Adrenal gland (tissue), 19 donors: ENCODE measurements at regions of chr2 and their contacts with region 1.

Region 1: DNA sequence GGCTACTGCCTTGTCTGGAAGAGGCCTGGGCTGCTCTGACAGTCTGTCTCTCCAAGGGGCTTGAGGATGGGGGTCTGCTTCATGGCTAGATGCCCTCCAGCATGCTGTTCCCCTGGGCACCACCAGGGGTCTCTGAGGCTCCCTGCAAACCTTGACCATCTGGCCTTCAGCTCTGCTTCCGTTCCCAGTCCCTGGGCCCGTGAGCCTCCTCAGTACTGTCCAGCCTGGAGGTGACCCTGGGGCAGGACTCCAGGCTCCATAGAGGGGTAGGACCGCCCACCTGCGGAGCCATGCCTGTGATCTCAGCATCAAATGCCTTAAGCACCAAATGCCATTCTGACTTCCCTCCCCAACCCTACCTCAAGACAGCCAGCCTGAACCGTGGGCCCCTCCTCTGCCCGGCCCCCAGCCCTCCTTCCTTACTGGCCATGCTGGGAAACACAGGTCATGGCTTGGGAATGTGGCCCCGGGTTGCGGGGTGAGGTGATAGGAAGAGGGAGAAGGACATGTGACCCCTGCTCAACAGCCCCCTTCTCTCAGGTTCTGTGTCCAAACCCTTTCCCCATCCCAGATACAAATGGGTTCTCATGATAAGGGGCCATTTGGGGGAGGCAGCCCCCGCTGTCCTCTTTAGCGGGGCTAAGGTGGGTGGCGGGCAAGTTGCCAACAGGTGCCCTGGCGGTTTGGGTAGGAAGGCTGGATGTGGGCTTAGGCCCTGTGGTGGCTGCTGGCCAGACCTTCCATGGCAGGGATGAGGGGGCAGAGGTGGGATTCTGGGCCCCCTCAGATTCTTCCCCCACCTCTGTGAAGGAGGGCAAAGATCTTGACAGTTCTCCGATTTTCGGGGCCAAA is 25.0 kb downstream of the SPEG start:
- DNase-seq: peak; percentile 45 to 79 (median 59)
- H3K4me3 ChIP-seq: no peak overlapping the region
- H3K27ac ChIP-seq: peak overlapping the region in 2 of 5 donors; percentile 0 to 47
- H3K4me1 ChIP-seq: no peaks in the 10 kb centered on the region
- H3K27me3 ChIP-seq: no peaks in the 10 kb centered on the region
- CTCF ChIP-seq: peak; percentile 62 to 78 (median 74)
- POLR2A ChIP-seq: no peak

Region 2: DNA sequence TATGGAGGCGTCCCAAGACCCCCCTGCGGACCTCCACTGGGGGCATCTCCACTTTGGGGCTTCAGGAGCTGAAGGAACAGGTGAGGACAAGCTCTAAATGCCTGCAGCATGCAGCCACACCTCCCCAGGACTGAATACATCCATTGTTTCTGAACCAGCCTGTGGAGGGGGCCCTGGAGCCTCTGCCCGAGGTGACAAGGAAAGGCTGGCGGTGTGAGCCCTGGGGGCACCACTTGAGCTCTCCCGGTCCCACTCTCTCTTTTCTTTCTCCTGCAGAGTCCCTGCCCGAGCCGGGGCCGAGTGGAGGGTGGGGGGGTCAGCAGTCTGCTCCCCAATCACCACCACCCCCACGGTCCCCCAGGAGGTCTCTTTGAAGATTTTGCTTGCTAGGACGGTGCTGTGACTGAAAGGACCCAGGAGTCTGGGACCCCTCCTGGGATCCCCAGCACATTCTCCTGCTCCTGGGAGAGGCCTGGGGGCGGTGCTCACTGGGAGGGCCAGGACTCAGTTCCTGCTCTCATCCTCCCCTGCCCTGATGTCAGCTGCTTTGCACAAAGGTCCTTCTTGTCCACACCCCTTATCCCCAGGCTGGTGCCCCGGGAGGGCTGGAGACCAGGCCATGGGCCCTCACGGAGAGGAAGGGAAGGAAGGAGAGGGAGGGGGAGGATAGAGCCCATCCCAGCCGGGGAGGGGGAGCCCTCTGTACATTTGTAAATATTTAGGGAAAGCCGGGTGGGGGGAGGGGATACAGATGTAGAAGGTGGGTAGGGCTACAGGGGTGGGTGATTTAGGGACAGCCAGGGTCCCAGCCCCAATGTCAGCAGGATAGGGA is 78.2 kb after region 1 on chr2:
- intact Hi-C with region 1: loop called (anchors 5 kb)
- DNase-seq: no peak
- H3K4me3 ChIP-seq: no peak overlapping the region
- H3K27ac ChIP-seq: no peak overlapping the region
- H3K4me1 ChIP-seq: peaks cover 8 to 16% of the 10 kb centered on the region in 2 donors
- H3K27me3 ChIP-seq: no peaks in the 10 kb centered on the region
- CTCF ChIP-seq: no peak
- POLR2A ChIP-seq: no peak

Region 3: DNA sequence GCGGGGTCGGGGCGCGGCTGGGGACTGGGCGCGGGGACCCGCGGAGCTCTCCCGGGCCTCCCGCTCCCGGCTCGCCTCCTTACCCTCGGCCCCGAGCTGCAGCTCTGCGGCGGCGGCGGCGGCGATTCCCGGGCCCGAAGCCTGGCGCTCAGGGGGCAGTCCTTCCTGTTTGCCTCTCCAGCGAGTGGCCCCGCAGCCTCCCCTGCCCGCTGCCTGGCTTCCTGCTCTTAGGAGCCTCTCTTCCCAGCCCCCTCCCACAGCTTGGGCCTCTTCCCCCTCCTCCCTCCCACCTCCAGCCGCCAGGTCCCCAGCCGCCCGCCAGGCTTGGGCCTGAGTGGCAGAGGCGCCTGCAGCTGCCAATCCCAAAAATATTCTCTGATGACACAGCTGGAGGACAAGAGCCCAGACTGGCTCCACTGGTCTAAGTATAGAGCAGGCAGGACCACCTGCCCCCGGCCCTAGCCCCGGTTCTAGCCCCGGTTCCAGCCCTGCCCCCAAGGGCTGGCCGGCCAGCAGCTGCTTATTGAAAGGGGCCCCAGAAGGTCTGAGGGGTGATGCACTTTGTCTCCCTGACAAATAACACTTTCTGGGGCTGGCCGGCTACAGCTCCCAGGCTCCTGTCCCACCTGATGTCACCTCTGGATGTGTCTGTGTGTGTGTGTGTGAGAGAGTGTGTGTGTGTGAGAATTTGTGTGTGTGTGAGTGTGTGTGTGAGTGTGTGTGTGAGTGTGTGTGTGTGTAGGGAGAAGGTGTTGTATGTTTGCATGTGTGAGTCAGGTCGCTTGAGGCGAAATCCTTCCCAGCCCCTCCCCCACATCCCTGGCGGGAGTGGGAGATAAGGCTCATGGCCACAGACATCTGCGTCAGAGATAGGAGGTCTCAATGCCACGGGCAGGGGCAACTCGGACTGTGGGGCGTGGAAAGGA is 111.9 kb after region 1 on chr2 and contains the start of gene OBSL1:
- intact Hi-C with region 1: no loop called
- DNase-seq: peak; percentile 90 to 96 (median 94)
- H3K4me3 ChIP-seq: peak within 1 kb of the TSS in 3 of 4 donors; percentile 54 to 90 (median 73)
- H3K27ac ChIP-seq: peak within 1 kb of the TSS; percentile 69 to 96 (median 92)
- H3K4me1 ChIP-seq: peaks cover 10 to 16% of the 10 kb centered on the region in 2 donors
- H3K27me3 ChIP-seq: no peaks in the 10 kb centered on the region
- CTCF ChIP-seq: peak in 3 of 6 experiments; percentile 4 to 27 (median 6)
- POLR2A ChIP-seq: peak in 1 of 2 donors; percentile 51
- total RNA-seq, gene OBSL1: 127 to 215 (median 174) TPM

Region 4: DNA sequence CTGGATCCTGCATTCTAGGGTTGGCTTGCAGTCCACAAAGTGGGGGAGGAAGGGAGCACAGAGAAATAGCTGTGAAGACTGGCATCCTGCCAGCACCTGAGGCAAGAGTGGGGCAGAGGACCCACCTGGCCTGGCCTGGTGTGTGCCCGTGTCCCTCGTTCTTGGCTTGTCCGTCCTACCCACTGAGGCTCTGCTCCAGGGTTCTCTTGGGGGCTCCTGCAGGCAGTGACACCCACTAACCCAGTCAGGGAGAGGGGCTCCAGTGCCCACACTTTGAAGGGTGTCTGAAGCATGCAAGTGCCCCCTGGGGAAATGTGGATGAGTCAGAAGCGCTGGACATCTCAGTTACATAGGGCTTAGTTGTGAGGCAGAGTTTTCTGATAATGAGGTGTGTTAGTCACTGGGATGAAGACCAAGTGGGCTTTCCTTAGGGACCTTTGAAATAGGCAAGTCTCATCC is 247.2 kb after region 1 on chr2:
- intact Hi-C with region 1: no loop called
- DNase-seq: no peak
- H3K4me3 ChIP-seq: no peak overlapping the region
- H3K27ac ChIP-seq: no peak overlapping the region
- H3K4me1 ChIP-seq: no peaks in the 10 kb centered on the region
- H3K27me3 ChIP-seq: no peaks in the 10 kb centered on the region
- CTCF ChIP-seq: no peak
- POLR2A ChIP-seq: no peak